ENCODE measurements at regions of chr18 and their contacts with region 1.

Region 1: DNA sequence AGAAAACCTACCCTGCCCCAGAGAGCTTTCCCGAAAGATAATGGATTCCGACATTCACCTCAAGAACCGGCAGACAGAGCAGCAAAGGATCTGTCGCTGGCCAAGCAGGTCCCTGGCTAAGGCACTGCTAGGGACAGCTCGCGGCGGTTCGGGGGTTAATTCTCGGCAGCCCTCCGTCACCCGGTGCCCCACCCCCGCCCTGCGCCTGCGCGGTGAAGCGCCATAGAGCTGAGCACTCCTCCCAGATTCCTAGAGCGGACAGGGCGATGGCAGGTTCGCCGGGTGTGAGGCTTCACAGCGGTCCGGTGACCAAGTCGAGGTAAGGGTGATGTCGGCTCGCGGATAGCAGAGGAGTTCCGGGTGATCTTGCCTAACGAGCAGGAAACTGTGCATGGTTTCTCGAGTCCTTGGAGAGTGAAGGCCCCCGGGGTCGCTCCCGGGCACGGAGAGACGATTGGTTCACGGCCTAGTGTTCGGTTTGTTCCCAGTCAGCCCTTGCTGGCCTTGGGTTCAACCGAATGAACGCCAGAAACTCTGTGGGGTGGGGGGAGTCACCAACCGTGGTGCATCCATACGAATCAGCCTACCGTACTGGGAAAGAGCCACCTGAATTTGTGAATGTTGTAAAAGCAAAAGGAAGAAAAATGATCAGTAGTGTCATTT is at the start of gene ZSCAN30:
- DNase-seq: peak; percentile 96
- ATAC-seq: peak; percentile 97
- H3K4me3 Mint-ChIP-seq: peak within 1 kb of the TSS; percentile 99
- H3K27ac Mint-ChIP-seq: peak within 1 kb of the TSS; percentile 88
- H3K4me1 Mint-ChIP-seq: peaks cover 39% of the 10 kb centered on the region
- H3K27me3 Mint-ChIP-seq: no peaks in the 10 kb centered on the region
- total RNA-seq, gene ZSCAN30: 18.8 to 23.5 TPM

Region 2: DNA sequence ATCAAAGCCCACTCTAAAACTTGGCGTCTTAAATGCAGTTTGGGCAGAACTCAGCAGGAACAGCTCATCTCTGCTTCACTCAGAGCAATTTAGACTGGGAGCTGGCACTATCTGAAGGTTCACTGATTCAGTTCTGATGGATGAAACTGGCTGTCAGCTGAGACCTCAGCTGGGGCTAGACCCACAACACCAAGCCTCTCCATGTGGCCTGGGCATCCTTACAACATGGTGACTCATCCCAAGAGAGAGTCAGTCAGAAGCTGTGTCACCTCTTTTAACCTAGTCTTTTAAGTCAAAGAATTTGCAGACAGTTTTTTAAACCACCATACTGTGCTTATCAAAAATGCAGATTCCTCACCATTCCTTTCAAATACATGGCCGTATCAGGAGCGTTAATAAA is 111.9 kb before region 1 on chr18:
- POLR2A ChIA-PET with region 1: no interaction called
- DNase-seq: no peak
- ATAC-seq: no peak
- H3K4me3 Mint-ChIP-seq: no peak overlapping the region
- H3K27ac Mint-ChIP-seq: no peak overlapping the region
- H3K4me1 Mint-ChIP-seq: peaks cover 5% of the 10 kb centered on the region
- H3K27me3 Mint-ChIP-seq: peaks cover 6% of the 10 kb centered on the region

Region 3: GRCh38 chr18:35227254-35227653 is 63.0 kb before region 1 on chr18:
- POLR2A ChIA-PET with region 1: no interaction called
- DNase-seq: no peak
- ATAC-seq: no peak
- H3K4me3 Mint-ChIP-seq: no peak overlapping the region
- H3K27ac Mint-ChIP-seq: no peak overlapping the region
- H3K4me1 Mint-ChIP-seq: peaks cover 3% of the 10 kb centered on the region
- H3K27me3 Mint-ChIP-seq: no peaks in the 10 kb centered on the region

Region 4: GRCh38 chr18:35240664-35241447 is 49.3 kb before region 1 on chr18 and contains the start of gene ZNF397:
- POLR2A ChIA-PET with region 1: interaction called, 21 read pairs
- DNase-seq: peak; percentile 94
- ATAC-seq: peak; percentile 99
- H3K4me3 Mint-ChIP-seq: peak within 1 kb of the TSS; percentile 96
- H3K27ac Mint-ChIP-seq: peak within 1 kb of the TSS; percentile 89
- H3K4me1 Mint-ChIP-seq: peaks cover 5% of the 10 kb centered on the region
- H3K27me3 Mint-ChIP-seq: no peaks in the 10 kb centered on the region
- total RNA-seq, gene ZNF397: 20.9 to 26.1 TPM

Region 5: DNA sequence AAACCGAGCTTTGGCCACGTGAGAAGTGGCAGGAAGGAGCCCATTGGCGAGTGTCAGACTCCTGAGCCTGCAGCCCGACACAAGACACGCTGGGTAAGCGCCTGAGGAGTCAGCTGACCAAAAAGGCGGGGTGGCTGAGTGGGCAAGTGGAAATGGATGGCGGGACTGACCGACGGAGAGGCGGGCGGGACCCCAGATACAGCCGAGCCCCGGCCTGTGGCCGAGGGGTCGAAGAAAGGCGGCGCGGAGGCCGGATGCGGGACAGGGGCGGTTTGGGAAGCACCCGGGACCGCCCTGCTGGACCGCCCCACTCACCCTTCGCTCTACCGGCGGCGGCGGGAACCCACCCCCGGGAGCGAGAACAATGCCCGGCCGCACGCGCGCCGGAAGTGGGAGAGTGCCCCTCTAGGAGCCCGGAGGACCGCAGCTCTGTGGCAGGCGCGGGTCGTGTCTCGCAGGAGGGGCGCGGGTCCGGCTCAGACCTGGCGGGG is 23.0 kb before region 1 on chr18:
- POLR2A ChIA-PET with region 1: interaction called, 17 read pairs
- DNase-seq: peak; percentile 68
- ATAC-seq: peak; percentile 66
- H3K4me3 Mint-ChIP-seq: peak overlapping the region; percentile 87
- H3K27ac Mint-ChIP-seq: peak overlapping the region; percentile 96
- H3K4me1 Mint-ChIP-seq: peaks cover 19% of the 10 kb centered on the region
- H3K27me3 Mint-ChIP-seq: no peaks in the 10 kb centered on the region

Region 6: GRCh38 chr18:35343936-35344735 is 53.9 kb after region 1 on chr18 and contains the start of gene ZNF24:
- POLR2A ChIA-PET with region 1: interaction called, 15 read pairs
- DNase-seq: peak; percentile 93
- ATAC-seq: peak; percentile 87
- H3K4me3 Mint-ChIP-seq: peak within 1 kb of the TSS; percentile 97
- H3K27ac Mint-ChIP-seq: peak within 1 kb of the TSS; percentile 95
- H3K4me1 Mint-ChIP-seq: peaks cover 21% of the 10 kb centered on the region
- H3K27me3 Mint-ChIP-seq: no peaks in the 10 kb centered on the region
- total RNA-seq, gene ZNF24: 63.2 to 66.4 TPM